Heart left ventricle (tissue), 16 donors: ENCODE measurements at regions of chr17 and their contacts with region 1.

Region 1: DNA sequence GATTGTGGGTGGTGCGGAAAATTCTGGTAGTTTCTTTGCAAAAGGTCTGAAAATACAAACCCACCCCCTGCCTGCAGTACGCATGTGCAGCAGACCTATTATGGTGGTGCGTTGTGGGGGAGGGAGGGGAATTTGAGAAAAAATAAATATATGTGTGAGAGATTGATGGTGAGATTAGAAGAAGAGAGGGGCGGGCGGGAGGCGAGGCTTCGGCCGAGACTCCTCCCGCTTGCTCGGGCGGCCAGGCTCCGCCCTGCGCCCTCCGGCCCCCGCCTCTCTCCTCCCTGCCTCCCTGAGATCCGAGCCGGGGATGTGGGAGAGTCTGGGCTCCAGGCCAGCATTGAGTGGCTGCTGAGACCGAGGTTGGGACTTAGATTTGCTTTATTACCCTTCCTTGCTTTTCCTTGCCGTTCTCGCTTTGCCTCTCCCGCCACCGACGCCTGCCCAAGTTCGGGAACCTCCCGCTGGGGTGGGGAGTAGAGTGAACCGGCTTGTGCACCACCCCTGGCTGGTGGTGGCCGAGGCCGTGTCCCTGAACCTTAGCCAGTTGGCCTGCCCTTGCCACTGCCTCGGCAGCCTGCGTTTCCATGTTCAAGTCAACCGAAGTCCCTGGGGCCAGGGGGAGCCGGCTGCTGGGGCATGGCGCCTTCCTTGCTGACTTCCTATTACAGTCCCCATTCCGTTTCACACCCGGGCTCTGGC is 956 bp upstream of the CHD3 start:
- DNase-seq: peak; percentile 93 to 95 (median 95)
- ATAC-seq: peak; percentile 79 to 87 (median 86)
- H3K4me3 ChIP-seq: peak overlapping the region; percentile 8 to 86 (median 76)
- H3K27ac ChIP-seq: peak overlapping the region; percentile 72 to 98 (median 91)
- H3K4me1 ChIP-seq: peaks cover 17 to 63% (median 45%) of the 10 kb centered on the region in 12 donors
- H3K27me3 ChIP-seq: no peaks in the 10 kb centered on the region
- CTCF ChIP-seq: no peak
- POLR2A ChIP-seq: peak in 1 of 2 donors; percentile 50

Region 2: GRCh38 chr17:7700510-7700909 is 187.1 kb before region 1 on chr17:
- intact Hi-C with region 1: no loop called
- DNase-seq: no peak
- ATAC-seq: no peak
- H3K4me3 ChIP-seq: no peak overlapping the region
- H3K27ac ChIP-seq: no peak overlapping the region
- H3K4me1 ChIP-seq: peaks cover 5 to 23% (median 13%) of the 10 kb centered on the region in 12 donors
- H3K27me3 ChIP-seq: peaks cover 11 to 21% (median 19%) of the 10 kb centered on the region in 9 donors
- CTCF ChIP-seq: no peak
- POLR2A ChIP-seq: no peak

Region 3: GRCh38 chr17:7834962-7835813 is 52.4 kb before region 1 on chr17:
- intact Hi-C with region 1: loop called in 1 of 10 experiments (anchors 2 kb)
- DNase-seq: peak; percentile 98 to 99 (median 99)
- ATAC-seq: peak; percentile 79 to 84 (median 82)
- H3K4me3 ChIP-seq: peak overlapping the region; percentile 59 to 99 (median 80)
- H3K27ac ChIP-seq: peak overlapping the region; percentile 86 to 100 (median 98)
- H3K4me1 ChIP-seq: peaks cover 0 to 56% (median 35%) of the 10 kb centered on the region in 12 donors
- H3K27me3 ChIP-seq: no peaks in the 10 kb centered on the region
- CTCF ChIP-seq: peak; percentile 56 to 94 (median 80)
- POLR2A ChIP-seq: peak; percentile 31 to 71

Region 4: GRCh38 chr17:7862692-7863437 is 24.8 kb before region 1 on chr17:
- intact Hi-C with region 1: loop called in 2 of 10 experiments (anchors 2 kb)
- DNase-seq: peak in 1 of 5 donors; percentile 49
- ATAC-seq: no peak
- H3K4me3 ChIP-seq: no peak overlapping the region
- H3K27ac ChIP-seq: no peak overlapping the region
- H3K4me1 ChIP-seq: peaks cover 0 to 20% (median 13%) of the 10 kb centered on the region in 12 donors
- H3K27me3 ChIP-seq: no peaks in the 10 kb centered on the region
- CTCF ChIP-seq: peak; percentile 69 to 90 (median 83)
- POLR2A ChIP-seq: no peak

Region 5: GRCh38 chr17:7915611-7916382 is 28.2 kb after region 1 on chr17 and contains the start of gene RNF227:
- intact Hi-C with region 1: loop called in 1 of 10 experiments (anchors 2 kb)
- DNase-seq: peak; percentile 92 to 94 (median 92)
- ATAC-seq: peak; percentile 84 to 92 (median 90)
- H3K4me3 ChIP-seq: peak within 1 kb of the TSS; percentile 37 to 83 (median 63)
- H3K27ac ChIP-seq: peak within 1 kb of the TSS; percentile 85 to 98 (median 95)
- H3K4me1 ChIP-seq: peaks cover 0 to 32% (median 25%) of the 10 kb centered on the region in 12 donors
- H3K27me3 ChIP-seq: no peaks in the 10 kb centered on the region
- CTCF ChIP-seq: peak in 1 of 12 donors; percentile 13
- POLR2A ChIP-seq: peak in 1 of 2 donors; percentile 30
- total RNA-seq, gene RNF227: 0.51 to 4.9 (median 1.1) TPM

Region 6: DNA sequence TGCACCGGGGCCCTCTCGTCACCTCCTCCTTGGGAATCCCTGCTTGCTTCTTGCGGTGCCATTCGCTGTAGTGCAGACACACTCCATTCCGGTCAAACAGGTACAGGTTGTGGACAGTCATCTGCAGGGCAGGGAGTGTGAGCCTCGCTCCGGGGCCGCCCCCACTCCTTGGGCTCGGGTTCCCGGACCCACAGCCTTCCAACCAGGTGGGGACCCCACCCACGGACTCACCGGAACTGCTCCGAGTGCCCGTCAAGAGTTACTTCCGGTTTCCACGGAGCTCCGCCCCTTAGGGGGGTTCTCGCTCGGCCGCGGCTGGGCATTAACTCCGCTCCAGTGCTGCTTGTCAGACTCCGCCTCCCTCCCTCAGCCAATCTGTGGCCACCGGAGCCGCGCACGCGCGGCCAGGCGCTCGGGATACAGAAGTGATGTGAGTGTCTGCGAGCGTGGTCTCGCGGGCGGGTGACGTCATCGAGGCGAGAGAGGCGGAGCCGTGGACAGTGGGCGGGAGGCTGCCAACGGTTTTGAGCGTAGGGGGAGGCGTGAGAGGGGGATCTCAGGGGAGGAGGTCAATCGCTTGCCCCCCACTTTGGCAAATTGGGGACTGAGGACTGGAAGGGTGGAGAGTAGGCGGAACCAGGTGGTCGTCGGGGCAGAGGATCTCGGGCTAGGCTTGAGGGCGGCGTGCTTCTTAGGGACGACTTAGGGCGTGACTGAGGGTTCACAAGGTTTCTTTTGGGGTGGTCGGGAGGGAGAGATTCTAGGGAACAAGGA is 44.3 kb after region 1 on chr17 and contains the starts of genes CNTROB and TRAPPC1:
- intact Hi-C with region 1: loop called in 2 of 10 experiments (anchors 2 to 5 kb)
- DNase-seq: peak; percentile 100
- ATAC-seq: peak; percentile 99 to 100 (median 99)
- H3K4me3 ChIP-seq: peak within 1 kb of the TSS; percentile 65 to 97 (median 80)
- H3K27ac ChIP-seq: peak within 1 kb of the TSS in 11 of 12 donors; percentile 52 to 88 (median 80)
- H3K4me1 ChIP-seq: peaks cover 2 to 30% (median 19%) of the 10 kb centered on the region in 12 donors
- H3K27me3 ChIP-seq: no peaks in the 10 kb centered on the region
- CTCF ChIP-seq: no peak
- POLR2A ChIP-seq: peak in 1 of 2 donors; percentile 73
- total RNA-seq, gene CNTROB: 7.9 to 19.2 (median 9.7) TPM
- total RNA-seq, gene TRAPPC1: 60.8 to 170 (median 125) TPM